Mammary epithelial cell (primary cell): ENCODE measurements at regions of chr6 and their contacts with region 1.

Region 1: DNA sequence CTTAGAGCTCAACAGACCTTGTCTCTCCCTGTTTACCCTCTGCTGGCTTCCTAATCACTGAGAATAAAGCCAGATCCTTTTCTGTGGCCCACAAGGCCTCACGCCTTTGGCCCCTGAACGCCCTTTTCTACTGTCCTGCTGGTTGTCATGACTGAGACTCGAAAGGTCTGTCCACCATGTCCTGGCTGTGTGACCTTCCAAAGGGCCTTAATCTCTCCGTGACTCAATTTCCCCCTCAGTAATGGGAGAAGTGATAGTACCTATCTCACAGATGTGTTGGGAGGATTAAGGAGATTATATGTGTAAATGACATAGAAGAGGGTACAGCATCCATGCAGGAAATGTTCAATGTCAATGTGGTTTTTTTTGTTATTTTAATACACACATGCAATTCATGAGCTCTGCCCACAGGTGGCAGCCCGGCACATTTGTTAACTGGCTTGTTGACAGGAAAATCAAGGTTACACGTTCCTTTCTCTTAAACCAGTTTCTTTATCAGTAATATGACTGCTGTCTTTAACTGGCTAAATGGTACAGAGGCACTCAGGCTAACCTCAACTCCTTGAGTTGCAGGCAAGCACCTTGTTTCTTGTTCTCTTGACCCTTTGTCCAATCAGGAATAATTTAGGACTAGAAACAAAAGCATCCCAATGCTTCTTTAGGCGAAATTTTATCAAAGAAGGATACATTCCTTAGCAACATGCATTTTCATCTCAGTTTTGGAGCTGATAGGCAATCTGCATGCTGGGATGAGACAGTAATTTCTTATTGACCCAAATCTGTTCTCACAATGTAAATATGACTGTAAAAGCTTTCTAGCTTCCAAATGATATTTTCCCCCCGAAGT is 16.6 kb downstream of the SLC22A1 start:
- DNase-seq: peak; percentile 46
- H3K4me3 ChIP-seq: no peak overlapping the region
- H3K27ac ChIP-seq: no peak overlapping the region
- H3K4me1 ChIP-seq: peaks cover 7% of the 10 kb centered on the region
- H3K27me3 ChIP-seq: no peaks in the 10 kb centered on the region
- CTCF ChIP-seq: peak; percentile 75 to 84

Region 2: DNA sequence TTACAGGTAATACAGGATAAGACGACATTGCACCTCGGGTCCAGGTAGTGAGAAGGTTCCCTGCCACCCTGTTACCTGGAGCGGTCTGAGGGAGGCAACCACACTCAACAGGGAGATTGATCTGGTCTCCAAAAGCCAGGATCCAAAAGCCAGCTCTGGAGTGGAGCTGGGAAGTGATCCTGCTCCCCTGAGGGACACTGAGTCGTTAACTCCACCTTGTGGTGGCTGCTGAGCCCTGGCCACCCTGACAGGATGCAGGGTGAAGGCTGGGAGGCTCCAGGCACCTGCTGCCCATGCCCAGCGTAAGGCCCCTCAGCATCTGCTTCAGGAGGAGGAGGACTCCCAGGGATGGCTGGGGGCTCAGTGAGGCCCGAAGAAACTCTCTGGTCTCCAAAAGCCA is 159.1 kb after region 1 on chr6:
- CTCF ChIA-PET with region 1: no interaction called
- dilution Hi-C with region 1: no loop called
- in situ Hi-C with region 1: no loop called
- intact Hi-C with region 1: loop called (anchors 1 kb)
- DNase-seq: no peak
- H3K4me3 ChIP-seq: no peak overlapping the region
- H3K27ac ChIP-seq: no peak overlapping the region
- H3K4me1 ChIP-seq: peaks cover 10% of the 10 kb centered on the region
- H3K27me3 ChIP-seq: no peaks in the 10 kb centered on the region
- CTCF ChIP-seq: peak in 1 of 2 donors; percentile 19

Region 3: DNA sequence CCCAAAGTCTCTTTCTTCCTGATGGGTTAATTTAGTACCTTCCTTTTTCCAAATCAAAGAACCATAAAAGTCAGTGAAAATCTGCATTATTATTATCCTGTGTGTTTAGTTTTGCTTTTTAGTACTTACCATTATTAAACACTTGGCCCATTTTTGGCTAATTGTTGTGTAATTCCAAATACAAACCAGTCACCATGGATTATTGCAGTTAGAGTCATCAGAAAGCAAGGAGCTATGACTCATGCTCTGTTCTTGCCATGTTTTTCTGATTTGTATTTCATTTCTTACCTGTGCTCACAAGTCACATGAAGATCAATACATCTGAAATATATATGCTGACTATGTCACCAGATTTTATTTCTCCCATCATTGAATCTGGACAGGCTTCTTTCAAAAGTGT is 241.3 kb after region 1 on chr6:
- CTCF ChIA-PET with region 1: no interaction called
- dilution Hi-C with region 1: no loop called
- in situ Hi-C with region 1: no loop called
- intact Hi-C with region 1: loop called (anchors 1 kb)
- DNase-seq: peak; percentile 71
- H3K4me3 ChIP-seq: no peak overlapping the region
- H3K27ac ChIP-seq: peak overlapping the region; percentile 63
- H3K4me1 ChIP-seq: peaks cover 26% of the 10 kb centered on the region
- H3K27me3 ChIP-seq: no peaks in the 10 kb centered on the region
- CTCF ChIP-seq: no peak

Region 4: GRCh38 chr6:160534050-160534696 is 396.0 kb after region 1 on chr6:
- CTCF ChIA-PET with region 1: no interaction called
- dilution Hi-C with region 1: no loop called
- in situ Hi-C with region 1: no loop called
- intact Hi-C with region 1: loop called (anchors 1 kb)
- DNase-seq: peak; percentile 25
- H3K4me3 ChIP-seq: no peak overlapping the region
- H3K27ac ChIP-seq: no peak overlapping the region
- H3K4me1 ChIP-seq: no peaks in the 10 kb centered on the region
- H3K27me3 ChIP-seq: no peaks in the 10 kb centered on the region
- CTCF ChIP-seq: peak; percentile 92 to 93

Region 5: DNA sequence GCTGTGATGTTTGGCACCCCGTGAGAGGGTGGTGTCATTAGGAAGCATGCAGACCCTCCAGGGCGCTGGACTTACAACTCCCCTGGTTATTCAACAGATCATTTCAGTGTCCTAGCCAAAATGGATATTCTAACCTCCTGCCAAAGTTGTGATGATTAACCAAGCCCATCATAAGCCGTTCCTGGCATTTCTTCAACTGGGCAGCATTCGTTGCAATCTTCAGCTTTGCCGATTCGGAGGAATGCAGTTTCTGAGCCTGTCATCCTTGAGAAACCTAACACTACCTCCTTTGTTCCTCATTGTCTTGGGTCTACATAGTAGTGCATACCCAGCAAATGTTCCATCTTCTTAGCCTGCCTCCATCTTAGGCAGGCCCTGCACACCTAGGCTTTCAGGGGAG is 774.2 kb after region 1 on chr6:
- CTCF ChIA-PET with region 1: no interaction called
- dilution Hi-C with region 1: no loop called
- in situ Hi-C with region 1: no loop called
- intact Hi-C with region 1: no loop called
- DNase-seq: no peak
- H3K4me3 ChIP-seq: no peak overlapping the region
- H3K27ac ChIP-seq: no peak overlapping the region
- H3K4me1 ChIP-seq: no peaks in the 10 kb centered on the region
- H3K27me3 ChIP-seq: peaks cover 7% of the 10 kb centered on the region
- CTCF ChIP-seq: no peak